Activated CD8-positive, alpha-beta memory T cell treated with anti-CD3 and anti-CD28 coated beads, Interleukin-2, amount 10 ng/mL, durations not matched to agents 7 days and 5 days (primary cell): ENCODE measurements at regions of chr5 and their contacts with region 1.

Region 1: DNA sequence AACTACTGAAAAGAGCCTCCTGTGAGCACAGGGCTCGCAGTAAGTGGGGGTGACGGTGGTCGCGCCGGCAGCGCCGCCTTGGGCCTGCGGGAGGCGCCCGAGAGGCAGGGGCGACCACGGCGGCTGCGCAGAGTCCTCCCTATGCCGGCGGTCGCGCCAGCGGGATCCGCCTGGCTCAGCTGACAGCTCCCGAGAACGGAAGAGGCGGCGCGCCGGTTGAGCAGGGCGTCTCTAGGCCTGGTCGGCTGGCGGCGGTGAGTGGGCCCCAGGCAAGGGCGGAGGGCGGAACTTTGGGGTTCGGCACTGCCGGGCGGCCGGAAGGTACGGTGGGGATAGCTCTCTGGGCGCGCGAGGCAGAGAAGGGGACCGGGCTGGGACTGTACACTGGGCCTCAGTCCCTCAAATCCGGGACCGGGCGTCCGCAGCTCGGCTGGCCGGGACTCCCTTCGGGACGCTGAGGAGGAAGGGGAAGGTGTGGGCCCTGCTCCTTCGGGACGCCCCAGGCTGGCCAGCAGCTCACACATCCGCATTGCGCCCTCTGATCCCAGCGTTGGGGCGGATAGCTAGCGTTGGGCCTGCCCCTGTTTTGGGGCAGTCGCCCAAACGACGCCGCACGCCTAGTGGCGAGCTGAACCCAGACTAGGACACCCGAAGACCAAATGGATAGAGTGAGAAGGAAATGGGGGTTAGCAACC is at the start of gene RNF14:
- DNase-seq: peak; percentile 97
- ATAC-seq: peak; percentile 97
- H3K4me3 Mint-ChIP-seq: peak within 1 kb of the TSS; percentile 88
- H3K27ac Mint-ChIP-seq: peak within 1 kb of the TSS; percentile 92
- H3K4me1 Mint-ChIP-seq: peaks cover 28% of the 10 kb centered on the region
- H3K27me3 Mint-ChIP-seq: no peaks in the 10 kb centered on the region
- total RNA-seq, gene RNF14: 23.8 to 28.2 TPM

Region 2: GRCh38 chr5:141701360-141702119 is 267.5 kb before region 1 on chr5:
- CTCF ChIA-PET with region 1: interaction called, 13 read pairs
- DNase-seq: no peak
- ATAC-seq: peak; percentile 28
- H3K4me3 Mint-ChIP-seq: peak overlapping the region; percentile 62
- H3K27ac Mint-ChIP-seq: no peak overlapping the region
- H3K4me1 Mint-ChIP-seq: peaks cover 22% of the 10 kb centered on the region
- H3K27me3 Mint-ChIP-seq: peaks cover 42% of the 10 kb centered on the region

Region 3: DNA sequence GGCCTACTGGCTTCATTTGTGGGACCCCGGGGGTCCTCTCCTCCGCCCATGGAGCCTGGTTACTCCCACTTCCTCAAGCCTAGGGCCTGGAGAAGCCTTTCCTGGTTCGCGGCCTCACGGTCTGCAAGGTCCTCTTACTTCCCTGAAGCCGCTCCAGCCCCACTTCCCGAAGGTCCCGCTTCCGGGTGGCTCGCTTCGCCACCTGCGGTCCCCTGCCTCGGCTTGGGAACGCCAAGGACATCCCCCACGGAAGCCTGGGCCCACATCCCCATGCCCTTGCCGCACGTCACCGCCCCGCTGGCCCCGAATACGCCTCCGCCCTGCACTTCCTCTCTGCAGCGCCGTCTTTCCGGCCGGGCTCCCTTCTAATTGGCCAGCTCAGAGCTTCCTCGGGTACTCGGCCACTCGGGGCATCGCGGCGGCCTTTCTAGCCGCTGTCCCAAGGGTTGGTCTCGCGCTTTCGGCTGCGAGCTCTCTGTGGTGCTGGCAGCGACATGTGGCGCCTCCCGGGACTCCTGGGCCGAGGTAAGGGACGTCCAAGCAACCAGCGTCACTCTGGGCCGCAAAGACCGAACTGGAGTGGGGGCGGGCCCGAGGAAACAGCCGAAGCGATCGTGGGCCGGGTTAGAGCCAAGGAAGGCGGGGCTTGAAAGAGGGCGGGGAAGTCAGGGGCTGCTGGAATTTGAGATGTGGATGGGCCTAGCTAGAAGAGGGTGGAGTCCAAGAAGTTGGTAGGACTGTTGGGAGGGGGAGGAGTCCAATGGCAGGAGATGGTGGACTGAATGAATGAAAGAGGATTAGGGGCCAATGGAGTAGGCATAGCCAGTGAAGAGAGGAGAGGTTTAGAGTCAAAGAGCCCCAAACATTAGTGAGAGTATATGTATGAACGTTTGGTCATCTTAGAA is 45.4 kb before region 1 on chr5 and contains the start of gene DELE1:
- CTCF ChIA-PET with region 1: interaction called, 19 read pairs
- DNase-seq: peak; percentile 96
- ATAC-seq: peak; percentile 98
- H3K4me3 Mint-ChIP-seq: peak within 1 kb of the TSS; percentile 85
- H3K27ac Mint-ChIP-seq: peak within 1 kb of the TSS; percentile 91
- H3K4me1 Mint-ChIP-seq: peaks cover 26% of the 10 kb centered on the region
- H3K27me3 Mint-ChIP-seq: no peaks in the 10 kb centered on the region
- total RNA-seq, gene DELE1: 65.4 to 68.7 TPM

Region 4: GRCh38 chr5:141992349-141992963 is 23.4 kb after region 1 on chr5:
- CTCF ChIA-PET with region 1: interaction called, 18 read pairs
- DNase-seq: peak; percentile 84
- ATAC-seq: peak; percentile 71
- H3K4me3 Mint-ChIP-seq: no peak overlapping the region
- H3K27ac Mint-ChIP-seq: no peak overlapping the region
- H3K4me1 Mint-ChIP-seq: no peaks in the 10 kb centered on the region
- H3K27me3 Mint-ChIP-seq: no peaks in the 10 kb centered on the region

Region 5: DNA sequence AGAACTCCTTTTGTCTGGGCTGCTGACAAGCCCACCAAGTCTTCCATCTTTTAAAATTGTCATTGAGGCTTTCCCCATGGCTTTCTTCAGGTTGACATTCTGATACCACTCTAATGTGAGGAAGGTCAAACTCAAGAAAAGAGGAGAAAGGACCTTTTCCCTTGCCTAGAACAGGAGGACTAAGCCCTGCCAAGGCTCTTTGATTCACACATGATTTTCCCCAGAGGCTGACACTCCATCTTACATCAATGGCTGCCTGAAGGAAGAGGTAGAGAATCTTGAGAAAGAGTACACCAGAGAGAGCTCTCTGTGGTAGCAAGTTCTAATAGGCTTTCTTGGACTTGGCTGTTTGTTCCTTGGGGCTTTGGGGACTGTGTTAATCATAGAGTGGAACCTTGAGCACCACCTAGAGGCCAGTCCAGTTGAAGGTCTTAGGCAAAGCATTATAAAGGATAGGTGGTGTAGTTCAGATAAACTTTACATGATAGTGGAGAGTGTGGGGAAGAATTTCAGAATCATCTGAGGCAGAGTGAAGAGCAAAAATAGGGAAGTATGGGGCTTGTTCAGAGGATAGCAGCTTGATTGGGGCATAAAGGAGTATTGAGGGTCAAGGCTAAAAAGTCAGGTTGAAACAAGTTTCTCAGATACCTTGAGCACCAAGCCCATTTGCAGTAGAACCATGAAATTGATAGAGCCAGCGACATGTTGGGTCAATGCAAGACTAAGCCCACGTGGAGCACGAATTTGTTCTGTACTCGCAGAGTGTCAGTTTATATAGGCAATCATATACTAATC is 176.2 kb after region 1 on chr5:
- CTCF ChIA-PET with region 1: interaction called, 21 read pairs
- DNase-seq: peak; percentile 75
- ATAC-seq: peak; percentile 89
- H3K4me3 Mint-ChIP-seq: no peak overlapping the region
- H3K27ac Mint-ChIP-seq: no peak overlapping the region
- H3K4me1 Mint-ChIP-seq: no peaks in the 10 kb centered on the region
- H3K27me3 Mint-ChIP-seq: no peaks in the 10 kb centered on the region